Activated CD4-positive, alpha-beta T cell treated with anti-CD3 and anti-CD28 coated beads, Interleukin-2, amount 10 ng/mL, durations not matched to agents 7 days and 5 days (primary cell): ENCODE measurements at regions of chr9 and their contacts with region 1.

Region 1: DNA sequence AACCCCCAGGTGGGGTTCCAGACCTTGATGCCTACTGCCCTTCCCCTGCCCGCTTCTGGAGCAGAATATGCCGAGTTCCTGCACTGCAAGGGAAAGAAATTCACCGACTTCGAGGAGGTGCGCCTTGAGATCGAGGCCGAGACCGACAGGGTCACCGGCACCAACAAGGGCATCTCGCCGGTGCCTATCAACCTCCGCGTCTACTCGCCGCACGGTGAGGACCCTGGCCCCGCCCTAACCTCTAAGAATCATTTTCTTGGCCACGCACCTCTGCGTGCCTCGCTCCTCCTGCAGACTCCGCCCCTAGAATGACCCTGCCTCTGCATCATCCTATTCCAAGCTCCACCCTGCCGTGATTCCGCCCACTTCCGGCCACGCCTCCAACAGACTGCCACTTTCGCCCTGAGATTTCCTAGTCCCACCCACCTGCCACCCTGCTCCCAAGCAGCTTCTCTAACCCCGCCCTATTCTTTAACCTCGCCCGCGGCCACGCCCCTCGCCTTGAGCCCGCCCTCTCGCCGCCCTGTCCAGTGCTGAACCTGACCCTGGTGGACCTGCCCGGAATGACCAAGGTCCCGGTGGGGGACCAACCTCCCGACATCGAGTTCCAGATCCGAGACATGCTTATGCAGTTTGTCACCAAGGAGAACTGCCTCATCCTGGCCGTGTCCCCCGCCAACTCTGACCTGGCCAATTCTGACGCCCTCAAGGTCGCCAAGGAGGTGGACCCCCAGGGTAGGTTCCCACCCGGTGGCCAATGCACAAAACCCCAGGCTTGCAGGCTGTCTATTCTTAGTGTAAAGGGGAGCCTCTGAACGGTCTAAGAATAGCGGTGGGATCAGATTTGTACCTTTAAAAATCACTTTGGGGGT is 15.6 kb downstream of the DNM1 start:
- DNase-seq: peak; percentile 95
- H3K4me3 Mint-ChIP-seq: peak overlapping the region; percentile 71
- H3K27ac Mint-ChIP-seq: peak overlapping the region; percentile 67
- H3K4me1 Mint-ChIP-seq: peaks cover 14% of the 10 kb centered on the region
- H3K27me3 Mint-ChIP-seq: peaks cover 6% of the 10 kb centered on the region

Region 2: GRCh38 chr9:128191406-128192046 is 27.2 kb before region 1 on chr9 and contains the start of gene CIZ1:
- CTCF ChIA-PET with region 1: interaction called, 12 read pairs
- POLR2A ChIA-PET with region 1: no interaction called
- DNase-seq: peak; percentile 70
- H3K4me3 Mint-ChIP-seq: peak within 1 kb of the TSS; percentile 93
- H3K27ac Mint-ChIP-seq: peak within 1 kb of the TSS; percentile 92
- H3K4me1 Mint-ChIP-seq: peaks cover 36% of the 10 kb centered on the region
- H3K27me3 Mint-ChIP-seq: peaks cover 4% of the 10 kb centered on the region
- total RNA-seq, gene CIZ1: 128 to 129 TPM

Region 3: GRCh38 chr9:128282500-128282899 is 63.7 kb after region 1 on chr9:
- CTCF ChIA-PET with region 1: no interaction called
- POLR2A ChIA-PET with region 1: no interaction called
- DNase-seq: no peak
- H3K4me3 Mint-ChIP-seq: no peak overlapping the region
- H3K27ac Mint-ChIP-seq: no peak overlapping the region
- H3K4me1 Mint-ChIP-seq: peaks cover 15% of the 10 kb centered on the region
- H3K27me3 Mint-ChIP-seq: no peaks in the 10 kb centered on the region